ENCODE measurements at regions of chr4 and their contacts with region 1.

Region 1: DNA sequence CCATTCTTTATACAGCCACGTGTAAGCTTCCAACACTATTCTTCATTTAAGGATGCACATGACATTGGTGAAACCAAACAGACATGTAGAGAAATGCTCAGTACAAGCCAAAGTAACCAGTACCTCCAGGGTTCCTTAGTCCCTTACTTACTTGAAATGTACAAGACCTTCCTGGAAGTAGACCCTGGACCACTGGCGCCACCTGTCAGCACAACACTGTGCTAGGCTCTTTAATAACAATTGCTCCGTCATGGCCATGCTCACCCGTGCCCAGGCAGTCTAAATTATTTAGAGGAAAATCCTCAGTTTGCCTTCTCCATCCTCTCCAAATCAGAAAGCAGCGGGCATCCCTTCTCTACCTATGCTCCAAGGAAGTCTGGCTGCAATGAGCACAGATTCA is 52.7 kb downstream of the ADGRA3 start:
- DNase-seq: no peak
- H3K4me3 ChIP-seq: no peak overlapping the region
- H3K27ac ChIP-seq: no peak overlapping the region
- H3K4me1 ChIP-seq: no peaks in the 10 kb centered on the region
- H3K27me3 ChIP-seq: no peaks in the 10 kb centered on the region
- CTCF ChIP-seq: no peak
- EP300 ChIP-seq: no peak
- POLR2A ChIP-seq: no peak

Region 2: DNA sequence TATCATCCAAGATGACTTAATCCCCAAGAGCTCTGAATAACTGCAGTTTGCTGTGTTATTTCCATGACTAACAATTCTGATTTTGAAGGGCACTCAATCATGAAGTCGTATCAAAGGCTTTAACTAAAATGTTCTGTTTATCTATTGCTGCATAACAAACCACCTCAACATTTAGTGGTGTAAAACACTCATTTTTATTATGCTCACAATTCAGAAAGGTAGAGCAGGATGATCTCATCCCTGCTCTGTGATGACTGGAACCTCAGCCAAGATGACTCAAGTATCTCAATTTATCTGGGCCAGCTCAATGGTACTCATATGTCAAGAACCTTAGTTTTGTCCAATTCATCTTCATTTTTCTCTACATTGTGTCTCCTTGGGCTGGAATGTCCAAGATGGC is 975.6 kb after region 1 on chr4:
- intact Hi-C with region 1: loop called in 1 of 4 experiments (anchors 10 kb)
- DNase-seq: no peak
- H3K4me3 ChIP-seq: no peak overlapping the region
- H3K27ac ChIP-seq: no peak overlapping the region
- H3K4me1 ChIP-seq: no peaks in the 10 kb centered on the region
- H3K27me3 ChIP-seq: no peaks in the 10 kb centered on the region
- CTCF ChIP-seq: no peak
- EP300 ChIP-seq: no peak
- POLR2A ChIP-seq: no peak